AG04449 (cell line): ENCODE measurements at regions of chr19 and their contacts with region 1.

Region 1: DNA sequence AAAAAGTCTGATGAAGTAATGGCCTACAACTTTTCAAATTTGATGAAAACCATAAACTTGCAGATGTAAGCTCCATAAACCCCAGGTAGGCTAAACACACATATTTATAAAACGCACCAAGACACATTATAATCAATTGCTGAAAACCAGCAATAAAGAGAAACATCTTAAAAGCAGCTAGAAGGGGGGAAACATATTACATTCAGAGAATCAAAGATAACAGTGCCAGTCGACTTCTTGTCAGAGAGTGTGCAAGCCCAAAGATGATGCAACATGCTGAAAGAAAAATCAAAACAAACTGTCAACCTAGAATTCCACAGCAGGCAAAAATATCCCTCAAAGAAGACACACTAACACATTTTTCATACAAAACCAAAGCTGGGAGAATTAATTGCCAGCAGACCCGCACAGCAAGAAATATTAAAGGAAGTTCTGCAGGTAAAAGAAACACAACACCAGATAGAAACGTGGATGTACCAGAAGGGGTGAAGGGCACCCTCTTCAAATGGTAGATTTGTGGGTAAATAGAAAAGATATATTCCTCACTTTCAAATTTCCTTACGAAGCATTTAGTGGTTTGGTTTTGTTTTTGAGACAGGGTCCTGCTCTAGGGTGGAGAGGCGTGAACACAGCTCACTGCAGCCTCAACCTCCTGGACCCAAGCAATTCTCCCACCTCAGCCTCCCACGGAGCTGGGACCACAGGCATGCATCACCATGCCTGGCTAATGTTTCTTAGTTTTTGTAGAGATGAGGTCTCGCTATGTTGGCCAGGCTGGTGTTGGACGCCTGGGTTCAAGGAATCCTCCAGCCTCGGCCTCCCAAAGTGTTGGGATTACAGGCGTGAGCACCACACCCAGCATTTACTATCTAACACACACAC is 16.5 kb upstream of the ATP1A3 start:
- DNase-seq: peak; percentile 14
- H3K4me3 ChIP-seq: no peak overlapping the region
- CTCF ChIP-seq: no peak

Region 2: DNA sequence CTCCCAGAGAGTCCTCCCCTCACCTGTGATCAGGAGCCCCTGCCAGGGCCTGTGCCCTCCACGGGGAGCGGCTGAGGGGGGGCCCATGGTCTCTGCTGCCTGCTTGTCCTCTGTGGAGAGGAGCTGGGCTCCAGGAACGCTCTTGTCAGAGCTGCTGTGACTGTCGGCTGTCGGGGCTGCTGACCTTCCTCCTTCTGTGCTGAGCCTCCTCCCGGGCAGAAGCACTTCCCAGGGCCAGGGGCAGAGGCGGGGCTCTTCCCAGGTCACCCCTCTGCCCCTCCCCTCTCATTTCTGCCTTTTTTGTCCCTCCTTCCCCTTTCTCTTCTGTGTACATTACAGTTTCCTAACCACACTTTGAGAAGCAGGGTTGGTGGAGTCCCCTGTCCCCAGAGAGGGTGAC is 383.6 kb before region 1 on chr19 and contains the start of gene CEACAM4:
- CTCF ChIA-PET with region 1: no interaction called
- POLR2A ChIA-PET with region 1: no interaction called
- DNase-seq: no peak
- H3K4me3 ChIP-seq: no peak within 1 kb of the TSS
- CTCF ChIP-seq: no peak

Region 3: DNA sequence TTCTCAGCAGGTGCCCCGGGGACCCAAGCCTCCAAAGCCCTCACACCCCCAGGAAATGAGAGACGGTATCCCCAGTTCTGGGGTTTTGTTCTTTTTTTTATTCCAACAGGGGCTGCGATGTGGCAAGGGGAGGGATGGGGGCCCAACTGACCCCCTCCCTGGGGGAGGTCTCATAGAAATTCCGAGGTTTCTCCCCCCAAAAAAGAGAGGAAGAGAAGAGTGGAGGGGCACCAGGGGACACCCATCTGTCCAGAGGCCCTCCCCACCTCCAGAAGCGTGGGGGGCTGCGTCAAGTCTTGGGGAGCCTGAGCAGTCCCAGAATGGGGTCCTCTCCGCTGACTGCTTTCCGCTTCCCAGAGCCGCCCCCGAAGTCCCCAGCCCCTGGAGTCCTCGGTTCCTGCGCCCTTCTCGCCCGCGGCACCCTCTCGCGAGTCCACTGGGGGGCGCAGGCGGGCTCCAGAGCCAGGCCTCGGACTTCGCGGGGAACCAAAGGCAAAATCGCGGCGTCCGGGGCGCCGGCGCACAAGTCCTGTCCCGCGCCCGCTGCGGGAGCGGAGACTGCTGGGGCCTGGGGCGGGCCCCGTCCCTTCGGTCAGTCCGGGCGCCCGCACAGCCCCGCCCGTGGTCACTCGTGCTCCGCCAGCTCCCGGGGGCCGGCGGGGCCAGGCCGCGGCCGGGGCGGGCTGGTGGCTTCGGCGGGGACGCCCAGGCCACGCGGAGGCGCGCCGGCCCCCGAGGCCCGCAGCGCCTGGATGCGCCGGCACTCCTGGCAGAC is 12.1 kb before region 1 on chr19:
- CTCF ChIA-PET with region 1: interaction called, 11 read pairs
- POLR2A ChIA-PET with region 1: no interaction called
- DNase-seq: no peak
- H3K4me3 ChIP-seq: no peak overlapping the region
- CTCF ChIP-seq: peak; percentile 87